ENCODE measurements at regions of chrX and their contacts with region 1.

Region 1: DNA sequence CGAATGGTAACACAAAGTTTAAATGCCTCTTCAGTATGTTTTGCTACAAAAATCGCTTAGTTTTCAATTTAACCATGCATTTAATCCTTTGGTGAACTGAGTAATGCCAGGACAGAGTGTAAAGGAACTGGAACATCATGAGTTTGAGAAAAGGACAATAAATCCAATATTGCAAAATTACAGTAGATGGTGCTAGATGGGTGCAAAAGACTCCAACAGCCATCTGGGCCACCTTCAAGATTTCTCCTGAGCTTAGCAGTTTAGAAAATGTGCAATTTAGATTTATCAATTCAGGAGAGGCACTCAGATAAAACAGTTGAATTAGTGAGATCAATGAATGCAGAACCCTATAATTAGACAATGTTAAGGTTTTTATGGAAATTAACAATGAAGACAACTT is 33.2 kb upstream of the MID1IP1 start:
- DNase-seq: peak in 4 of 5 donors; percentile 24 to 25 (median 24)
- H3K4me3 ChIP-seq: no peak overlapping the region
- H3K4me3 Mint-ChIP-seq: no peak overlapping the region
- H3K27ac ChIP-seq: no peak overlapping the region
- H3K27ac Mint-ChIP-seq: no peak overlapping the region
- H3K4me1 ChIP-seq: no peaks in the 10 kb centered on the region
- H3K4me1 Mint-ChIP-seq: no peaks in the 10 kb centered on the region
- H3K27me3 ChIP-seq: no peaks in the 10 kb centered on the region
- H3K27me3 Mint-ChIP-seq: no peaks in the 10 kb centered on the region

Region 2: DNA sequence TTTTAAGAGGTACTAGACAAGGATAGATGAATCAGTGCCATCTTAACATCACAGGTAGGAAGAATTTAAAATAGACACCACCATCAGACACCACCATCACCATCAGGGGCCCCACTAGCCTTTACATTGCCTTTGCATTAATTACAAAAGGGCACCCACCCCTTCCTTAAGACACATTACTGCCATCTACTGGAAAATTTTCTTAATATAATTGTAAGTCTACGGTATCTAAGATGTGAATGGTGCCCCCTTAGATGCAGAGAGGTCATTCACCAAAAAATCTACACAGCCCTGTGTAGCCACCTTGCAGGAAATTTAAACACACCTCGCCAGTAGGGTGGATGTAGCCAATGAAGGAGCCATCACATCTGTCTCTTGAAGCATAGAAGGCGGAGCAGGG is 217.3 kb after region 1 on chrX:
- CTCF ChIA-PET with region 1: interaction called, 19 read pairs
- POLR2A ChIA-PET with region 1: interaction called, 3 read pairs
- intact Hi-C with region 1: loop called (anchors 1 kb)
- DNase-seq: peak in 4 of 5 donors; percentile 24 to 35 (median 28)
- H3K4me3 ChIP-seq: no peak overlapping the region
- H3K4me3 Mint-ChIP-seq: no peak overlapping the region
- H3K27ac ChIP-seq: no peak overlapping the region
- H3K27ac Mint-ChIP-seq: no peak overlapping the region
- H3K4me1 ChIP-seq: no peaks in the 10 kb centered on the region
- H3K4me1 Mint-ChIP-seq: peaks cover 0 to 2% (median 0%) of the 10 kb centered on the region in 4 donors
- H3K27me3 ChIP-seq: no peaks in the 10 kb centered on the region
- H3K27me3 Mint-ChIP-seq: no peaks in the 10 kb centered on the region

Region 3: GRCh38 chrX:39149761-39150160 is 381.7 kb after region 1 on chrX:
- CTCF ChIA-PET with region 1: interaction called, 12 read pairs
- POLR2A ChIA-PET with region 1: no interaction called
- intact Hi-C with region 1: loop called (anchors 1 kb)
- DNase-seq: peak in 4 of 5 donors; percentile 35 to 46 (median 40)
- H3K4me3 ChIP-seq: no peak overlapping the region
- H3K4me3 Mint-ChIP-seq: no peak overlapping the region
- H3K27ac ChIP-seq: no peak overlapping the region
- H3K27ac Mint-ChIP-seq: no peak overlapping the region
- H3K4me1 ChIP-seq: no peaks in the 10 kb centered on the region
- H3K4me1 Mint-ChIP-seq: no peaks in the 10 kb centered on the region
- H3K27me3 ChIP-seq: no peaks in the 10 kb centered on the region
- H3K27me3 Mint-ChIP-seq: no peaks in the 10 kb centered on the region

Region 4: GRCh38 chrX:39242187-39242586 is 474.1 kb after region 1 on chrX:
- CTCF ChIA-PET with region 1: interaction called, 3 read pairs
- POLR2A ChIA-PET with region 1: no interaction called
- intact Hi-C with region 1: loop called (anchors 5 kb)
- DNase-seq: peak in 4 of 5 donors; percentile 14 to 27 (median 20)
- H3K4me3 ChIP-seq: no peak overlapping the region
- H3K4me3 Mint-ChIP-seq: no peak overlapping the region
- H3K27ac ChIP-seq: no peak overlapping the region
- H3K27ac Mint-ChIP-seq: no peak overlapping the region
- H3K4me1 ChIP-seq: no peaks in the 10 kb centered on the region
- H3K4me1 Mint-ChIP-seq: no peaks in the 10 kb centered on the region
- H3K27me3 ChIP-seq: no peaks in the 10 kb centered on the region
- H3K27me3 Mint-ChIP-seq: no peaks in the 10 kb centered on the region

Measured in CD4-positive, alpha-beta memory T cell (primary cell).